ENCODE measurements at regions of chr10 and their contacts with region 1.

Region 1: DNA sequence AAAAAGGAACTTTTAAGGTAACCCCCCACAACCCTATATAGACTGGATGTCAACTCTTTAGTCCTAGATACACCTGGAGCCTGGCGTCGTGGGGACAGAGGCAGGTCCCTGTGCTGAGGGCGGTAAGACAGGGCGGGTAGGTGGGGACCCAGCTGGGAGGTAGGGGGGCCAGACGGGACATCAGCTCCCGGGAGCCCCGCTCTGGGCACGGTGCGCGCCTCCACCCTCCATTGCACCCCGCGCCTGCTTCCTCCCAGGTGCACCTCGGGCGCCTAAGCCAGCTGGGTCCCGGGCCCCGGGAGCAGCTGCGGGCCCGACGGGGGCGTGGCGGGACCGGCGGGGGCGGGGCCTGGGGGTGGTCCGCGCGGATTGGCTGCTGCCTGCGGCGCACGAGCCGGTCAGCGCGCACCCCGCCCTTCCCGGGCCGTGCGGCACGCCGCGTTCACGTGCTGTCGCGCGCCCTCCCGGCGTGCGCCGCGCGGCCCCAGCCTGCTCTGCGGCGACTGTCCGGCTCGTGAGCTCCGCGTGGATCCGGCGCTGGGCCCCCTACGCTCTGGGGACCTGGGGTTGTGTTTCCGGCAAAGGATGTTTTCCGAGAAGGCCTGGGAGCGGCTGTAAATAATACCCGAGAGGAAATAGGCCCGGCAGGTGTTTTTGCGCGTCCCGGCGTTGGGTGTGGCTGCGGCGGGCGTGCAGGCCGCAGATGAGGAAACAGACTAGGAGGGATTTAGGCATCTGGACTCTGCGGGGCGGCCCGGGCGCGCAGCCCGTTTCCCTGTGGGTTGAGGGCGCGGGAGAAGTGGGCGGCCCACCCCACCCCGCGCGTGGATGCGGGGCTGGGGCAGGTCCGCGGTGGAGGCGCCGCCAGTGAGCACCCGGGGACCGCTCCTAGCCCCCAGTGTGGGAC is 39.1 kb upstream of the PFKFB3 start:
- DNase-seq: peak; percentile 90
- ATAC-seq: peak; percentile 98
- H3K4me3 Mint-ChIP-seq: peak overlapping the region; percentile 96
- H3K27ac Mint-ChIP-seq: peak overlapping the region; percentile 97
- H3K4me1 Mint-ChIP-seq: peaks cover 34% of the 10 kb centered on the region
- H3K27me3 Mint-ChIP-seq: no peaks in the 10 kb centered on the region
- CTCF ChIP-seq: no peak

Region 2: DNA sequence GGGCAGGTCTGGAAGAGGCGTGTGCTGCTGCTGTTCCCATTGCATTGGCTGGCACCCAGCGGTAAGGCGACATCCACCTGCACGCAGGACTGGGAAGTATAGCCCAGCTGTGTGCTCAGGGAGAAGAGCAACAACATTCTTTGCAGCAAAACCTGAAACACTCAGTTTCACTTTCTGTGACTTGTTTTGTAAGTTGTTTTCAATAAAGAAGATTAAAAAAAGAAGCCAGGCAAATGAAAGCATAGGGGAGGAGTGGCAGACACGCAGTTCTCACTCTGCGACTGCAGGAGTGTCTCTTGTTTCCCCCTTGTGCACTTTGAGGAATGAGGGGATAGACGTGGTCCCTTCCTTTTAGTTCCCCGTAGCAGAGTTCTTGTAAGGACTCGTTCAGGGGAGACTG is 267.8 kb before region 1 on chr10:
- CTCF ChIA-PET with region 1: no interaction called
- POLR2A ChIA-PET with region 1: no interaction called
- intact Hi-C with region 1: no loop called
- DNase-seq: no peak
- ATAC-seq: peak; percentile 47
- H3K4me3 Mint-ChIP-seq: peak overlapping the region; percentile 73
- H3K27ac Mint-ChIP-seq: peak overlapping the region; percentile 90
- H3K4me1 Mint-ChIP-seq: peaks cover 58% of the 10 kb centered on the region
- H3K27me3 Mint-ChIP-seq: no peaks in the 10 kb centered on the region
- CTCF ChIP-seq: no peak

Region 3: GRCh38 chr10:6144406-6145165 is 19.0 kb before region 1 on chr10:
- CTCF ChIA-PET with region 1: no interaction called
- POLR2A ChIA-PET with region 1: interaction called, 28 read pairs
- intact Hi-C with region 1: loop called (anchors 1 kb)
- DNase-seq: peak; percentile 85
- ATAC-seq: peak; percentile 86
- H3K4me3 Mint-ChIP-seq: peak overlapping the region; percentile 88
- H3K27ac Mint-ChIP-seq: peak overlapping the region; percentile 77
- H3K4me1 Mint-ChIP-seq: peaks cover 66% of the 10 kb centered on the region
- H3K27me3 Mint-ChIP-seq: no peaks in the 10 kb centered on the region
- CTCF ChIP-seq: no peak

Region 4: DNA sequence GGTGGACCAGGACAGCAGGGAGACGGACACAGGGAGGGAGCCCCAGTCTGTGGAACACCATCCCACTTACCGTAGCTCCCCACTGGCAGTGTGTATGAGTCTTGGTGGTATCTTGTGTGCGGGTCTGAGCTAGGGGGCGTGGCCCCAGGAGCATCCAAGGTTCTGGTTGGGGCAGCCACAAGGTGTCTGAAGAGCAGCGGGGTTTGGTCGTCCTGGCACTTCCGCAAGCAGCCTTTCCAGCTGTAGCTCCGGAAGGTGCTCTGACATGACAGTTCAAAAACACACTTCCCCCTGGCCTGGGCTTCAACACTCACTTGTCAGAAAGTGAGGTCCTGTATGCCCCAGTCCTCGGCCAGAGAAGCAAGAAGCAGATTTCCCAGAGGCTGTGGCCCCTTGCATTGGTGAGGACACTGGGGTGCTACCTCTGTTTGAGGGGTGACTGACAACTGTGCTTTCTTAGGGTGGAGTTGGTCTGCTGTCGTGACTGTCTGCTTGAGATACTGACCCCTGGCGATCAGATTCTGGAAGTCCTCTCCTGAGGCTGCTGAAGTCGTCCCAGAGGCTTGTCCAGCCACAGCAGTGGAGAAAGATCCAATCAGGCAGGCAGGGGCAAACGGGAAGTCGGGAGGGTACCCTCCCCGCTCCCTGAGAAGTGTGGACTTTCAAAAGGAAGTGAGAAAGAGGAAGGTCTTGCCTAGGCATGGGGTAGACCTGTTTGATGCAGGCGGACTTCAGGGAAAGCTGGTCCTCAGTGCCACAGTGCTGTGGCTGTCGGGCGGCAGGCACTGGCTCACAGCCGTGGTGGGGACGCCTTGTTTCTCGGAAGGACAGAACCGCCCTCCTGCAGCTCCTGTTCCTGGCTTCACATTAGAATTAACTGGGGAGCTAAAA is 12.3 kb before region 1 on chr10:
- CTCF ChIA-PET with region 1: interaction called, 21 read pairs
- POLR2A ChIA-PET with region 1: interaction called, 28 read pairs
- intact Hi-C with region 1: loop called (anchors 1 kb)
- DNase-seq: peak; percentile 53
- ATAC-seq: peak; percentile 83
- H3K4me3 Mint-ChIP-seq: peak overlapping the region; percentile 79
- H3K27ac Mint-ChIP-seq: peak overlapping the region; percentile 85
- H3K4me1 Mint-ChIP-seq: peaks cover 45% of the 10 kb centered on the region
- H3K27me3 Mint-ChIP-seq: no peaks in the 10 kb centered on the region
- CTCF ChIP-seq: no peak